Dorsolateral prefrontal cortex (tissue), 120 donors: ENCODE measurements at regions of chr16 and their contacts with region 1.

Region 1: GRCh38 chr16:24499193-24499814 is 40.1 kb upstream of the RBBP6 start:
- DNase-seq: peak in 9 of 10 donors; percentile 18 to 80 (median 67)
- H3K4me3 ChIP-seq: peak overlapping the region in 3 of 59 donors; percentile 9 to 23 (median 13)
- H3K27ac ChIP-seq: peak overlapping the region in 3 of 59 donors; percentile 12 to 65 (median 33)
- H3K27me3 ChIP-seq: peaks cover 0 to 7% (median 0%) of the 10 kb centered on the region in 45 donors
- CTCF ChIP-seq: peak in 55 of 56 donors; percentile 11 to 68 (median 52)

Region 2: GRCh38 chr16:23795378-23795777 is 703.9 kb before region 1 on chr16:
- intact Hi-C with region 1: loop called in 1 of 2 experiments (anchors 10 kb)
- DNase-seq: no peak
- H3K4me3 ChIP-seq: no peak overlapping the region
- H3K27ac ChIP-seq: no peak overlapping the region
- H3K27me3 ChIP-seq: no peaks in the 10 kb centered on the region
- CTCF ChIP-seq: no peak

Region 3: GRCh38 chr16:24041826-24042631 is 457.3 kb before region 1 on chr16:
- intact Hi-C with region 1: loop called (anchors 1 to 2 kb)
- DNase-seq: peak; percentile 65 to 88 (median 73)
- H3K4me3 ChIP-seq: no peak overlapping the region
- H3K27ac ChIP-seq: peak overlapping the region in 1 of 59 donors; percentile 4
- H3K27me3 ChIP-seq: no peaks in the 10 kb centered on the region
- CTCF ChIP-seq: peak; percentile 62 to 96 (median 85)